ENCODE measurements at regions of chr16 and their contacts with region 1.

Region 1: GRCh38 chr16:4802659-4803287 is 340 bp upstream of the ROGDI start:
- DNase-seq: peak; percentile 91
- ATAC-seq: peak; percentile 92
- H3K4me3 Mint-ChIP-seq: peak overlapping the region; percentile 78
- H3K27ac Mint-ChIP-seq: peak overlapping the region; percentile 63; the same call in 1 of the 2 replicates
- H3K4me1 Mint-ChIP-seq: peaks cover 18% of the 10 kb centered on the region
- H3K27me3 Mint-ChIP-seq: no peaks in the 10 kb centered on the region
- CTCF ChIP-seq: no peak

Region 2: DNA sequence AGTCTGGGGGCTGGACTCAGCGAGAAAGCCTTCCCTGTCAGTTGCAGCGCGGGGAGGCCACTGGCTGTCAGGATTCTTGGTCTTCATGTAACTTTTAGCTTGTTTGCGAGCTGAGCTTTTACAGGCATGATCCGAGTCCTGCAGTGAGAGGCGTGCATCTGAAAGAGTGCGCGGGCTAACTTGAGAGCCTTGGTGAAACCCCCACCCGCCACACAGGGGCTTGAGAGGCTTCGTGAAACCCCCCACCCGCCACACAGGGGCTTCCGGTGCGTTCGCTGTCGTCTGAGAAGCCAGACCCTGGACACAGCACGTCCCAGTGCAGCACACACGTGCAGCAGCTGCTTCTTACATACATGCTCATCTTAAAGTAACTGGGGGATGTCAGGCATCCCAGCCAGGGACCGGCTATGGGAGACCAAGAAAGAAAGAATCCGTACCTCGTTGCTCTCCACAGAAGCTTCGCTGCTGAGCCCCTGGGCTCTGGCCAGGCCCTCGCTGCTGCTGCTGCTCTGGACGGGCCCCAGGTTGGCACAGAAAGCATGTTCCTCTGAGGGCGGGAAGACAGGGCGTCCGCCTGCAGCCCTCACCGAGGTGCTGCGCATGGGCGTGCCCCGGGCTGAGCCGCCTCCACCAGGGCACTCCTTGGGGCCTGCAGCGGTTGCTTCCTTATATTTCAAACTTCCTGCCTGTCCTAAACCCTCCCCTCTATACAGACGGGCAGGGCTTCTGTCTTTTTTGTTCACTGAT is 101.6 kb before region 1 on chr16:
- CTCF ChIA-PET with region 1: no interaction called
- POLR2A ChIA-PET with region 1: no interaction called
- DNase-seq: no peak
- ATAC-seq: no peak
- H3K4me3 Mint-ChIP-seq: no peak overlapping the region
- H3K27ac Mint-ChIP-seq: no peak overlapping the region
- H3K4me1 Mint-ChIP-seq: no peaks in the 10 kb centered on the region
- H3K27me3 Mint-ChIP-seq: no peaks in the 10 kb centered on the region
- CTCF ChIP-seq: no peak

Region 3: DNA sequence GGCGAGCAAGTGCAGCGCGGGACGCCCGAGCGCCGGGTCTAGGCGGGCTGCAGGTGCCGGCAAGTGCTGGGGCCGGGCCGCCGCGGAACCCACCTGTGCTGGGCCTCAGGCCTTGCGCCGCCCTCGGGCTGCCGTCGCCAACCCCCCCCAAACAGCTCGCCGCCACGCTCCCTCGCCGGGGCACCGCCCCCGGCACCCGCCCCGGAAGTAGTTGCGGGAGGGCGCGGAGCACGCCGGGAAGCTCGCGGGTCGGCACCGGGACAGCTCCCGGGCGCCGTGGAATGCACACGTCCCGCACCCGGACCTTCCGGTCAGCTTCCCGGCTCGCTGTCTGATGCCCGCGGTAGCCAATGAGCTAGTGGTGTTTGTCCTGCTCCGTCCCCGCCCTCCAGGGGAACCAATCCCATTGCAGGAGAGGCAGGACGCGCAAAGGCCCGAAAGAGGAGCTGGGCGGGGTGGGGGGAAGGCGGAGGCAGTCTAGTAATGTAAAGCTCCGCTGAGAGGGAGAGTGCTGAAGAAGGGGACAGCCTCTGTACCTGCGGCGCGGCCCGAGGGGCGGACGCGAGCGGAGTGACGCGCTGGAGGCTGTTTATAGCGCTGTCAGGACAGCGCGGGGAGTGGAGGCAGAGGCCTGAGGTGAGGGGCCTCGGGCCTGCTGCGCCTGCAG is 68.6 kb before region 1 on chr16 and contains the starts of genes ANKS3 and DNAAF8:
- CTCF ChIA-PET with region 1: interaction called, 11 read pairs
- POLR2A ChIA-PET with region 1: interaction called, 11 read pairs
- DNase-seq: peak; percentile 95
- ATAC-seq: peak; percentile 94
- H3K4me3 Mint-ChIP-seq: peak within 1 kb of the TSS; percentile 93
- H3K27ac Mint-ChIP-seq: peak within 1 kb of the TSS; percentile 97
- H3K4me1 Mint-ChIP-seq: peaks cover 9% of the 10 kb centered on the region
- H3K27me3 Mint-ChIP-seq: peaks cover 4% of the 10 kb centered on the region; the same call in 1 of the 2 replicates
- CTCF ChIP-seq: no peak
- total RNA-seq, gene ANKS3: 28.6 to 35.6 TPM (median 31.5 TPM) in 3 replicates
- total RNA-seq, gene DNAAF8: 0.09 to 0.41 TPM (median 0.14 TPM) in 3 replicates

Region 4: GRCh38 chr16:4766874-4767628 is 35.7 kb before region 1 on chr16 and contains the start of gene ZNF500:
- CTCF ChIA-PET with region 1: interaction called, 4 read pairs
- POLR2A ChIA-PET with region 1: interaction called, 16 read pairs
- DNase-seq: peak; percentile 100
- ATAC-seq: peak; percentile 90
- H3K4me3 Mint-ChIP-seq: peak within 1 kb of the TSS; percentile 86
- H3K27ac Mint-ChIP-seq: peak within 1 kb of the TSS; percentile 94
- H3K4me1 Mint-ChIP-seq: peaks cover 17% of the 10 kb centered on the region
- H3K27me3 Mint-ChIP-seq: no peaks in the 10 kb centered on the region
- CTCF ChIP-seq: no peak
- total RNA-seq, gene ZNF500: 14.3 to 19.9 TPM (median 15.5 TPM) in 3 replicates

Measured in WTC11 (cell line).